Posterior cingulate gyrus (tissue), 11 donors: ENCODE measurements at regions of chr9 and their contacts with region 1.

Region 1: GRCh38 chr9:136051517-136052432 is 43.3 kb downstream of the NACC2 start:
- DNase-seq: peak; percentile 76 to 98 (median 88)

Region 2: DNA sequence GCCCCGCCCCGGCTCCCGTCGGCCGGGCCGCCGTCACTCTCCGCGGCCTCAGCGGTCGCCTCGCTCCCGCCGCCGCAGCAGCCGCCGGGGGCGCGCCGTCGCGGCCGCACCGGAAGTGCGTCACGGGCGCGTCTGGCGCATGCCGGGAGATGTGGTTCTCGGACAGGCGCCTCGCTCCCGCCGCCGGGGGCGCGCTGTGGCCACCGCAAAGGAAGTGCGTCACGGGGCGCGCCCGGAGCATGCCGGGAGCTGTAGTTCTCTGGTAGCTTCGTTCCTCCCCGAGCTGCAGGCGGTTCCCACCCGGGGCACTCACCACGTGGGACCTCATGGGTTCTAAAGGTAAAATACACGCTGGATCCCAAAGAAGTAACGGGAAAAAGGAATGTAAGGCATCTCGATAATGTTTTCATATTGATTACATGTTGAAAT is 90.5 kb before region 1 on chr9 and contains the start of gene UBAC1:
- intact Hi-C with region 1: loop called (anchors 5 kb)
- DNase-seq: peak; percentile 94 to 100 (median 96)

Region 3: DNA sequence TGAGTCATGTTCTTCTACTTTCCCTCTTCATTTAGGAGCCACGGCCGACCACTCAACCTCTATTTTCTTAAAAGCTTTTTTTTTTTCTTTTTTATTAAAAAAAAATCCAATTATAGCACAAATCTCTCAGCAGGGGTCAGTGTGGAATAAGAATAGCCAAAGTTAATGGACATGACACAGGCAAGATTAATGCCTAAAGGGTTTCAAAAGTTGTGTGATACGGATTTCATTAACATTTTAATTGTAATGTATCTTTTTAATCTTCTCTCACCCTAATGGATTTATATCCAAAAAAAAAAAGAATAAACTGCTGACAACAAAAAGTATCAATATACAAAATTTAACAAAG is 37.9 kb after region 1 on chr9:
- intact Hi-C with region 1: loop called (anchors 5 kb)
- DNase-seq: no peak

Region 4: GRCh38 chr9:136109351-136110081 is 57.7 kb after region 1 on chr9:
- intact Hi-C with region 1: loop called (anchors 5 kb)
- DNase-seq: peak; percentile 87 to 99 (median 91)

Region 5: DNA sequence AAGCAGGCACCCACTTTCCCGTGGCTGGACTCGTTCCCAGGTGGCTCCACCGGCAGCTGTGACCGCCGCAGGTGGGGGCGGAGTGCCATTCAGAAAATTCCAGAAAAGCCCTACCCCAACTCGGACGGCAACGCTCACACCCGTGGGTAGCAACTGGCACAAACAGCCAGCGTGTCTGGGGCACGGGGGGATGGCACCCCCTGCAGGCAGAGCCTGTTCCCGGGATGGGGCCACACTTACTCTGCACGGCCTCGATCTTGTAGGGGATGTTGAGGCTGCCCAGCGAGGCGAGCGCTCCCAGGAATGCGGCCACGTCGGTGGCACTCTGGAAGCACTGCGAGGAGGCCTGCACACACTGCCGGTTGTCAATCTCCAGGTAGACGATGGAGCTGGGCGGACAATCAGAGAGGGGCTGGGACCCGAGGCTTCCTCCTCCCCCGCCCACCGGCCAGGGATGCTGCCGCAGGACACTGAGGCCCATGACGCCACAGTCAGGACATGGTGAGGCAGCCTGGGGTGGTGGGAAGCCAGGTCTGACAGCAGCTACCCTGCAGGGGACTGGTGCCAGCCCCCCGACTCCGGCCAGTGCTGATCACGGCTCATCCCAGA is 451.3 kb after region 1 on chr9:
- intact Hi-C with region 1: no loop called
- DNase-seq: peak in 1 of 10 donors; percentile 67